MCF 10A (cell line): ENCODE measurements at regions of chr10 and their contacts with region 1.

Region 1: DNA sequence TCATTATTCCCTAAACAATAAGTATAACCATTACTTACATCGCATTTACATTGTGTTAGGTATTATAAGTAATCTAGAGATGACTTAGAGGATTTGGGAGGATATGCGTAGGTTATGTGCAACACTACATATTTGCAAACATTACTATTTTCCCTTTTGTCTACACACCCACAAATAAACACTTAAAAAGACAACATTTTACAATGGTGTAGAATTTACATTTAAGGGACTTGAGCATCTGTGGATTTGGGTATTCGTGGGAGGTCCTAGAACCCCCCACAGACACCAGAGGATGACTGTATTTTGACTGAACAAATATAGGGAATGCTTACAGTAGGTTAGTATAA is 220.2 kb upstream of the MYO3A start:
- DNase-seq: no peak
- H3K4me3 Mint-ChIP-seq: no peak overlapping the region
- H3K27ac Mint-ChIP-seq: no peak overlapping the region
- H3K4me1 Mint-ChIP-seq: no peaks in the 10 kb centered on the region
- H3K27me3 Mint-ChIP-seq: peaks cover 29% of the 10 kb centered on the region
- CTCF ChIP-seq: no peak

Region 2: GRCh38 chr10:25522946-25523608 is 190.8 kb before region 1 on chr10:
- CTCF ChIA-PET with region 1: no interaction called
- POLR2A ChIA-PET with region 1: no interaction called
- intact Hi-C with region 1: loop called (anchors 5 kb)
- DNase-seq: peak; percentile 53
- H3K4me3 Mint-ChIP-seq: no peak overlapping the region
- H3K27ac Mint-ChIP-seq: no peak overlapping the region
- H3K4me1 Mint-ChIP-seq: no peaks in the 10 kb centered on the region
- H3K27me3 Mint-ChIP-seq: peaks cover 48% of the 10 kb centered on the region
- CTCF ChIP-seq: peak; percentile 19

Region 3: GRCh38 chr10:25701652-25702051 is 12.2 kb before region 1 on chr10:
- CTCF ChIA-PET with region 1: interaction called, 21 read pairs
- POLR2A ChIA-PET with region 1: no interaction called
- intact Hi-C with region 1: no loop called
- DNase-seq: no peak
- H3K4me3 Mint-ChIP-seq: no peak overlapping the region
- H3K27ac Mint-ChIP-seq: no peak overlapping the region
- H3K4me1 Mint-ChIP-seq: no peaks in the 10 kb centered on the region
- H3K27me3 Mint-ChIP-seq: peaks cover 28% of the 10 kb centered on the region
- CTCF ChIP-seq: no peak